ENCODE measurements at regions of chrX and their contacts with region 1.

Region 1: DNA sequence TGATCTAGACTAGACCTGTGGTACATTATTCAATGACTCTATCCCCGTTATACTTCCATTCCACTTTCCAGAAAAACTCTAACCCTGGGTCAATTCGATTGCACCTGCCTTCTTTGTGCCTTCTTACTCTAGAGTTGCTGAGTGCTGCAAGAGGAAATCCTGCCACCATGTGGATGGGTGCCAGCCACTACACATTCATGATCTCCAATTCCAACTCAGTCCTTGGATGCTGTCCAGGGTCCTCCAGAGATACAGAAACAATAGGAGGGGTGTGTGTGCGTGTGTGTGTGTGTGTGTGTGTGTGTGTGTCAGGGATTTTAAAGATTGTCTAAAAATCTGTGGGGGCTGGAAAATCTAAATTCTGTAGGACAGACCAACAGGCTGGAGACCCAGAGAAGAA is 42.9 kb upstream of the INTS6L start:
- DNase-seq: peak; percentile 44 to 50 (median 46)
- H3K4me3 ChIP-seq: no peak overlapping the region
- H3K4me3 Mint-ChIP-seq: no peak overlapping the region
- H3K27ac ChIP-seq: no peak overlapping the region
- H3K27ac Mint-ChIP-seq: no peak overlapping the region
- H3K4me1 ChIP-seq: no peaks in the 10 kb centered on the region
- H3K4me1 Mint-ChIP-seq: peaks cover 2 to 5% (median 3%) of the 10 kb centered on the region in 4 donors
- H3K27me3 ChIP-seq: no peaks in the 10 kb centered on the region
- H3K27me3 Mint-ChIP-seq: peaks cover 0 to 2% of the 10 kb centered on the region in 2 donors

Region 2: GRCh38 chrX:135295238-135295943 is 182.2 kb before region 1 on chrX:
- CTCF ChIA-PET with region 1: no interaction called
- POLR2A ChIA-PET with region 1: no interaction called
- intact Hi-C with region 1: loop called (anchors 2 kb)
- DNase-seq: peak; percentile 51 to 71 (median 63)
- H3K4me3 ChIP-seq: peak overlapping the region; percentile 29 to 57
- H3K4me3 Mint-ChIP-seq: peak overlapping the region; percentile 91 to 95 (median 93)
- H3K27ac ChIP-seq: peak overlapping the region; percentile 44
- H3K27ac Mint-ChIP-seq: peak overlapping the region; percentile 86 to 96 (median 91)
- H3K4me1 ChIP-seq: peaks cover 20% of the 10 kb centered on the region
- H3K4me1 Mint-ChIP-seq: peaks cover 10 to 20% (median 13%) of the 10 kb centered on the region in 4 donors
- H3K27me3 ChIP-seq: no peaks in the 10 kb centered on the region
- H3K27me3 Mint-ChIP-seq: no peaks in the 10 kb centered on the region

Region 3: DNA sequence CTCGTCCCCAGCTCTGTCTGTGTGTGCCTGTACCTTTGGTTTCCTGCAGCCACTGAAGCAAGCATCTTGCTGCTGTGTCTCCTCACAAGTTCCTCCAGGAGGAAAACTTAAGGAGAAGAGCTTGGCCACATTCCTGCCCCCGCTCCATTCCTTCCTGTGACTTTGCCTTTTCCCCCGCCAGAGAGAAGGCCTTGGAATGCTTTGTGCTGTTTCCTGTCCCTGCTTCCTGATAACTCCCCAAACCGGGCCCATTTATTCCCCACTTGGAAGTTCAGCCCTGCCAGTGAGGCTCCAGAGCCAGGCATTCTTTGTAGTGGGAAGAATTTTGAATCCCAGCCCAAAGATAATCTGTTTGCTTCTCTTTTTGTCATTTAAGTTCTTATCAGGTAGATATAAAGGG is 22.8 kb before region 1 on chrX:
- CTCF ChIA-PET with region 1: no interaction called
- POLR2A ChIA-PET with region 1: no interaction called
- intact Hi-C with region 1: no loop called
- DNase-seq: no peak
- H3K4me3 ChIP-seq: no peak overlapping the region
- H3K4me3 Mint-ChIP-seq: no peak overlapping the region
- H3K27ac ChIP-seq: no peak overlapping the region
- H3K27ac Mint-ChIP-seq: no peak overlapping the region
- H3K4me1 ChIP-seq: no peaks in the 10 kb centered on the region
- H3K4me1 Mint-ChIP-seq: no peaks in the 10 kb centered on the region
- H3K27me3 ChIP-seq: no peaks in the 10 kb centered on the region
- H3K27me3 Mint-ChIP-seq: no peaks in the 10 kb centered on the region

Region 4: DNA sequence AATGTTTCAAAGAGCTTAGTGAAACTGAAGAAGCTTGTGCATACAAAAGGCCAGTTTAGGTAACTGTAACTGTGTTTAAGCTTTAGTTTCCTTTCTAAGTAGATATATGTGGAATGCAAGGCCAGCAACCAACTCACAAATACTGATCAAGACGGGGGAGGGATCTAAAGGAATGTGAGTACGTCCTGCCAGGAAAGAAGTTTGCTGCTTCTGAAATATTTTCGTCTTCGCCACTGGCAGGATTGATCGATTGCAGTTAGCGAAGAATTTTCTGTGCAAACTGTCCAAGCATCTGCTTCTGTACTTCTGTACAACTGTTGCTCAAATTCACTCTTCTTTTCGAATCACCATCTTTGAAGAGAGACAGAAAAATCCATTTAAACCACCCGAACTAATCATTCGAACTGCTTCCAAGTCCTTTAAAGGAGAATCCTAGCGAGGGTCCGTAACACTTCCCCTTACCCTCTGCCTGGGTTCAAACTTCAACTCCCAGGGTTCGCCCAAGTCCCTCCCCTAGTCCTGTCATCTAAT is 42.5 kb after region 1 on chrX:
- CTCF ChIA-PET with region 1: no interaction called
- POLR2A ChIA-PET with region 1: no interaction called
- intact Hi-C with region 1: no loop called
- DNase-seq: no peak
- H3K4me3 ChIP-seq: peak overlapping the region; percentile 9 to 44
- H3K4me3 Mint-ChIP-seq: peak overlapping the region; percentile 92 to 99 (median 97)
- H3K27ac ChIP-seq: peak overlapping the region; percentile 83
- H3K27ac Mint-ChIP-seq: peak overlapping the region; percentile 96 to 100 (median 99)
- H3K4me1 ChIP-seq: peaks cover 30% of the 10 kb centered on the region
- H3K4me1 Mint-ChIP-seq: peaks cover 19 to 41% (median 26%) of the 10 kb centered on the region in 4 donors
- H3K27me3 ChIP-seq: no peaks in the 10 kb centered on the region
- H3K27me3 Mint-ChIP-seq: peaks cover 0 to 2% of the 10 kb centered on the region in 2 donors

Region 5: DNA sequence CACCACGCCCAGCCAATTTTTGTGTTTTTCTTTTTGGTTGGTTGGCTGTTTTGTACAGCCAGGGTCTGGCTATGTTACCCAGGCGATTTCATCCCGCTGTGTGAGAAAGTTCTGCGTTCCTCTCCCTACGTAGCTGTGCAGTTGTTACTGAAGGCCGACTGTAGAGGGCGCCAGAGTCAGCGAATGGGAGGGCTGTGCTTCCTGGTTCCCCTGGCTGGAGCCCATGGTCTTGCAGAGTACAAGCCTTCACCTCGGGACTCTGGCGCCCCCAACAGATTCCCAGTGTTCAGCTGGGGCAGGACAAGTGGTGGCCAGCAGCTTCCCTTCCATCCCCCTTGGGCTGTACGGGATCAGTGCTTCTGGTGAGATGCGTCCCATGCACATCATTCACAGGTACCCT is 230.3 kb after region 1 on chrX:
- CTCF ChIA-PET with region 1: no interaction called
- POLR2A ChIA-PET with region 1: no interaction called
- intact Hi-C with region 1: no loop called
- DNase-seq: no peak
- H3K4me3 ChIP-seq: no peak overlapping the region
- H3K4me3 Mint-ChIP-seq: no peak overlapping the region
- H3K27ac ChIP-seq: no peak overlapping the region
- H3K27ac Mint-ChIP-seq: no peak overlapping the region
- H3K4me1 ChIP-seq: no peaks in the 10 kb centered on the region
- H3K4me1 Mint-ChIP-seq: no peaks in the 10 kb centered on the region
- H3K27me3 ChIP-seq: no peaks in the 10 kb centered on the region
- H3K27me3 Mint-ChIP-seq: no peaks in the 10 kb centered on the region

Measured in CD4-positive, alpha-beta memory T cell (primary cell).